MCF 10A (cell line): ENCODE measurements at regions of chr6 and their contacts with region 1.

Region 1: GRCh38 chr6:151340219-151340978 is 51.0 kb downstream of the ZBTB2 start:
- DNase-seq: no peak
- H3K4me3 Mint-ChIP-seq: no peak overlapping the region
- H3K27ac Mint-ChIP-seq: no peak overlapping the region
- H3K4me1 Mint-ChIP-seq: no peaks in the 10 kb centered on the region
- H3K27me3 Mint-ChIP-seq: no peaks in the 10 kb centered on the region
- CTCF ChIP-seq: no peak

Region 2: DNA sequence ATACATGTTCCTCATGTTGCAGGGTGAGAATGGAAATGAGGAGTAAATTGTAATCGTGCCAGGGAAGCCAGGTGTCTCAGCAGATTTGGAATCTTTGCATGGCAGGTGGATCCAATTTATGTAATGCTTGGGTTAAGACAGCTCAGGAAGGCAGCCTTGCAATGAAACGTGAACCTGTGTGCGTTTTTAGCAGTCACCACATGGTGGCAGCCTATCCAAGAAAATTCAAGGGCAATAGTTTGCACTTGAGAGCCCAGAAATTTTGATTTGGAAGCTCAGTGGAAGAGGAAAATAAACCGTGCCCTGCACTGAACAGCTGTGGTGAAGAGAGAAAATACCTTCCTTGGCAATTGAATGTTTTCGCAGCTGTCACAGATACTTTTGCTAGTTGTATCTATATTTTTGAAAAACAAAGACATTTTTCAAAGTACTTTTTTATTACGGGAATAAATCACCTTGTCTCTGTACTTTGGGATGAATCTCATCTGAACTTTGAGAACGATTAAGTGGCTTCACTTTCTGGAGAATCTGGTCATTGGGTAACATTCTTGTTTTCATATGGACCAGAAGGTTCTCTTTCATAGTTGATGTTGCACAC is 448.4 kb before region 1 on chr6:
- CTCF ChIA-PET with region 1: interaction called, 81 read pairs
- POLR2A ChIA-PET with region 1: no interaction called
- intact Hi-C with region 1: no loop called
- DNase-seq: peak; percentile 72
- H3K4me3 Mint-ChIP-seq: no peak overlapping the region
- H3K27ac Mint-ChIP-seq: no peak overlapping the region
- H3K4me1 Mint-ChIP-seq: peaks cover 6% of the 10 kb centered on the region
- H3K27me3 Mint-ChIP-seq: no peaks in the 10 kb centered on the region
- CTCF ChIP-seq: peak; percentile 74

Region 3: GRCh38 chr6:150940941-150941340 is 399.5 kb before region 1 on chr6:
- CTCF ChIA-PET with region 1: interaction called, 10 read pairs
- POLR2A ChIA-PET with region 1: no interaction called
- intact Hi-C with region 1: no loop called
- DNase-seq: no peak
- H3K4me3 Mint-ChIP-seq: no peak overlapping the region
- H3K27ac Mint-ChIP-seq: no peak overlapping the region
- H3K4me1 Mint-ChIP-seq: no peaks in the 10 kb centered on the region
- H3K27me3 Mint-ChIP-seq: no peaks in the 10 kb centered on the region
- CTCF ChIP-seq: no peak

Region 4: GRCh38 chr6:151004415-151005024 is 335.9 kb before region 1 on chr6:
- CTCF ChIA-PET with region 1: interaction called, 13 read pairs
- POLR2A ChIA-PET with region 1: interaction called, 3 read pairs
- intact Hi-C with region 1: no loop called
- DNase-seq: peak; percentile 93
- H3K4me3 Mint-ChIP-seq: peak overlapping the region; percentile 54
- H3K27ac Mint-ChIP-seq: peak overlapping the region; percentile 83
- H3K4me1 Mint-ChIP-seq: peaks cover 27% of the 10 kb centered on the region
- H3K27me3 Mint-ChIP-seq: no peaks in the 10 kb centered on the region
- CTCF ChIP-seq: no peak